IMR-90 (cell line): ENCODE measurements at regions of chrX and their contacts with region 1.

Region 1: DNA sequence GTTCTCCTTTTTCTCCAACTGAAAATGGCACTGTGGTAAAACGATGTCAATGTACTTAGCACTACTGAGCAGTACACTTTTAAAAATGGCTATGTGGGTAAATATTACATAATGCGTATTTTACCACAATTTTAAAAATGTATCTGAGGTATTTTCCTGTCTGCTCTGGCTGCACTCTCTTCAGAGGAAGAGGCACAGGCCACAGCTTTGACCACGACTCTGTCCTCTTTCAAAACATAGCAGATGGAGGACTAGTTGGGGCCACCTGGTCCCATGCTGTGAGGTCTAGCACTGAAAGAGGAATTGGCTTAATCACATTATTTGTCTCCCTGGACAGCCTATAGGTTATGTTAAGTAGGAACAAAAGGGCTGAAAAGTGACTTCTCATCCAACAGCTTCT is 5.2 kb downstream of the KCNE5 start:
- DNase-seq: no peak
- ATAC-seq: no peak
- H3K4me3 ChIP-seq: no peak overlapping the region
- H3K27ac ChIP-seq: no peak overlapping the region
- H3K4me1 ChIP-seq: no peaks in the 10 kb centered on the region
- H3K27me3 ChIP-seq: no peaks in the 10 kb centered on the region; the same call in none of the 2 replicates
- CTCF ChIP-seq: no peak
- POLR2A ChIP-seq: no peak
- RAD21 ChIP-seq: no peak

Region 2: GRCh38 chrX:109498434-109498833 is 121.3 kb before region 1 on chrX:
- CTCF ChIA-PET with region 1: no interaction called
- POLR2A ChIA-PET with region 1: no interaction called
- dilution Hi-C with region 1: no loop called
- in situ Hi-C with region 1: loop called (anchors 10 kb)
- intact Hi-C with region 1: no loop called
- DNase-seq: no peak
- ATAC-seq: no peak
- H3K4me3 ChIP-seq: no peak overlapping the region
- H3K27ac ChIP-seq: no peak overlapping the region
- H3K4me1 ChIP-seq: no peaks in the 10 kb centered on the region
- H3K27me3 ChIP-seq: peaks cover 18% of the 10 kb centered on the region
- CTCF ChIP-seq: no peak
- POLR2A ChIP-seq: no peak
- RAD21 ChIP-seq: no peak

Region 3: GRCh38 chrX:109553862-109554261 is 65.9 kb before region 1 on chrX:
- CTCF ChIA-PET with region 1: no interaction called
- POLR2A ChIA-PET with region 1: no interaction called
- dilution Hi-C with region 1: no loop called
- in situ Hi-C with region 1: no loop called
- intact Hi-C with region 1: no loop called
- DNase-seq: no peak
- ATAC-seq: no peak
- H3K4me3 ChIP-seq: no peak overlapping the region
- H3K27ac ChIP-seq: no peak overlapping the region
- H3K4me1 ChIP-seq: no peaks in the 10 kb centered on the region
- H3K27me3 ChIP-seq: peaks cover 4% of the 10 kb centered on the region
- CTCF ChIP-seq: no peak
- POLR2A ChIP-seq: no peak
- RAD21 ChIP-seq: no peak